WTC11 (cell line): ENCODE measurements at regions of chr2 and their contacts with region 1.

Region 1: DNA sequence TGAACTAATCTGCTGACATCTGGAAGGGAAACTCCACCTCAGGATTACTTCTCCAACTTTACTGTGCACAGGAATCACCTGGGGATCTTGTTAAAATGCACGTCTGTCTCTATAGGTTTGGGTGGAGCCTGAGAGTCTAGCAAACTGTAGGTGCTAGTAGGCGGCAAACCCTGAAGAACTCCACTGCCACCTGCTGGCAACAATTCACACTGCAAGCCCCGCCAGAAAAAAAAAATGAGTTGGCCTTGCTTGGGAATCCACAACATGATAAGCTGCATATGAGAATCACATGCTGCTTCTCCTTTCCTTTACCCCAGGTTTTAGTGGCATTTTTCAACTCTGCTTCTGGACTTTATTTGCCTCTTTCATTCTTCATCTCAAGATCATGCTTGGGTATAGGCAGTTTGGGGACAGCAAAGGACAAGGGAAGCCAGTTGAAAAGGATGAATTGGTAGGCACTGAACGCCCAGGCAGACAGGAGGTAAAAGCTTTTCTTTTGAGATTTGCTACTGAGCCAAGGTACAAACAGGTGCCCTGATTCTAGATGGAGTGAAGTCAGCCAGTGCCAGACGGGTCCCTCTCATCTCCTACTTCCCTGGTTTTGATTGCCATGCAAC is 88.8 kb downstream of the VIT start:
- DNase-seq: peak; percentile 71
- ATAC-seq: peak; percentile 78
- H3K4me3 Mint-ChIP-seq: peak overlapping the region; percentile 39; the same call in 1 of the 2 replicates
- H3K27ac Mint-ChIP-seq: peak overlapping the region; percentile 41; the same call in 1 of the 2 replicates
- H3K4me1 Mint-ChIP-seq: peaks cover 67% of the 10 kb centered on the region
- H3K27me3 Mint-ChIP-seq: no peaks in the 10 kb centered on the region; the same call in 1 of the 2 replicates
- CTCF ChIP-seq: peak; percentile 98

Region 2: DNA sequence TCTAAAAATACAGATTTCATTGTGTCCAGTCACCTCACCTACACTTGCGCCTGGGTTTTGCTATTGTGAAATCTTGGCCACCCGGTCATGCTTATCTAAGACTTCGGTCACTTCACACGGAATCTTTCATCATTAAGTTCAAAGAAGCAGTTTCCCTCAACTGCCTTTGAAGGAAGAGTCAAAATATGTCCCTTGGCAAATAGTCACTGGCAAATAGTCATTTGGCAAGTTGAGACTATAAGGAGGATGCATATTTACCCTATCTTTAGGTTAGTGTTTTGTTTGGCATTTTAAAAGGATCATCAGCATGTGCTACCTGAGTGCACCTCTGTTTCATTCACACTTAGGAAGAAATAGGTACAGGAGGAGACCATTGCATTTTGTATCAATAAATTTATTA is 283.2 kb before region 1 on chr2:
- CTCF ChIA-PET with region 1: no interaction called
- POLR2A ChIA-PET with region 1: no interaction called
- DNase-seq: no peak
- ATAC-seq: no peak
- H3K4me3 Mint-ChIP-seq: no peak overlapping the region
- H3K27ac Mint-ChIP-seq: no peak overlapping the region
- H3K4me1 Mint-ChIP-seq: peaks cover 2% of the 10 kb centered on the region
- H3K27me3 Mint-ChIP-seq: no peaks in the 10 kb centered on the region
- CTCF ChIP-seq: no peak

Region 3: GRCh38 chr2:36663851-36664695 is 121.2 kb before region 1 on chr2:
- CTCF ChIA-PET with region 1: interaction called, 13 read pairs
- POLR2A ChIA-PET with region 1: no interaction called
- DNase-seq: no peak
- ATAC-seq: peak; percentile 88
- H3K4me3 Mint-ChIP-seq: no peak overlapping the region
- H3K27ac Mint-ChIP-seq: no peak overlapping the region
- H3K4me1 Mint-ChIP-seq: peaks cover 13% of the 10 kb centered on the region
- H3K27me3 Mint-ChIP-seq: no peaks in the 10 kb centered on the region
- CTCF ChIP-seq: peak; percentile 65

Region 4: DNA sequence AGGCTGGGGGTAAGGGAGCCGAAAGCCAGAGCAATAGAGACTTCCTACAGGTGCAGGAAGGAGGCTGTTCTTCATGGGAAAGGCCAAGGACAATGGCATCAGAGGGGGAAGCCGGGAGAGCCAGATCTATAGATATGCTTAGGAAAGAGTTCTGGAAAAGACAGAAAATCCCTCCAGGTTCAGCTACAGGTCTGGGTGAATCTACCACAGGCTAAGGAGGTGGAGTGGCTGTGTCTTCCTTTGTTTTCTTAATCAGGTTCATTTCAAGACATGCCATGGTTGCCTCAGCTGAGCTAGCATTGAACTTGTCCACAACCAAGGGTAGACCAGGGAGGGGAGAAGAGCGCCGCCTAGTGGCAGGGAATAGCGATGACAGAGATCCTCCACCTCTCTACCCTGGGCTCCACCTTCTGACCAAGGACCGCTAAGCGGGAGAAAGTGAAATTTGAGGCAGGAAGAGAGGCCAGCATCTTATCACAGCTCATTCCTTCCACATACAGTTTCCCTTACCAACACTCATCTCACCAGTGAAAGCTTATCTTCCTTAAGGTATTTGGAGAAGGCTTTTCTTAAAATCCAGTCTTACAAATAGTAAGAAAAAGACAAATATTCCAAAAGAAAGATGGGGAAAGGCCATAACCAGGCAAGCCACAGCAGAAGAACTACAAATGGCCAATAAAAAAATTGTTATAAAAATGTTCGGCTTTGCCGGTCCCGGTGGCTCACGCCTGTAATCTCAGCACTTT is 14.6 kb before region 1 on chr2:
- CTCF ChIA-PET with region 1: interaction called, 48 read pairs
- POLR2A ChIA-PET with region 1: no interaction called
- DNase-seq: peak; percentile 82
- ATAC-seq: peak; percentile 96
- H3K4me3 Mint-ChIP-seq: no peak overlapping the region
- H3K27ac Mint-ChIP-seq: no peak overlapping the region
- H3K4me1 Mint-ChIP-seq: peaks cover 10% of the 10 kb centered on the region
- H3K27me3 Mint-ChIP-seq: no peaks in the 10 kb centered on the region
- CTCF ChIP-seq: peak; percentile 98

Region 5: DNA sequence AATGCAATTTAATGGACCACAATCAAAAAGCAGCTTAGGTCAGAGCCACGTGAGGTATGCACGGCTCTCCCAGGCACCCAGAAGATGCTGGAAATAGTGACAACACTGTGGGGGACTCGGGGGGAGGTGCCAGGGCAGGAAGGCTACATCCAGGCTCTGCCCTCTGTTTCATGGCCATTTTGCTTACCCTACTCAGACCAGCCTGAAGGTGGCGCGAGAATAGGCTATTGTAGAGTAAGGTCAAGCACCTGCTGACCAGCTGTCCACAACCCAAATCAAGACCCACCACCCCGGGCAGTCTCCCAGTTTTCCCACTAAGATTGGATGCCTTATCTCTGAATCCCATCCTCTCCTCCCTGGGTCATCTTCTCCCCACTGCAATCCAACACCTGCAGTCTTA is 26.9 kb after region 1 on chr2:
- CTCF ChIA-PET with region 1: interaction called, 13 read pairs
- POLR2A ChIA-PET with region 1: no interaction called
- DNase-seq: peak; percentile 78
- ATAC-seq: peak; percentile 99
- H3K4me3 Mint-ChIP-seq: no peak overlapping the region
- H3K27ac Mint-ChIP-seq: no peak overlapping the region
- H3K4me1 Mint-ChIP-seq: peaks cover 3% of the 10 kb centered on the region; the same call in 1 of the 2 replicates
- H3K27me3 Mint-ChIP-seq: peaks cover 2% of the 10 kb centered on the region; the same call in 1 of the 2 replicates
- CTCF ChIP-seq: no peak; the same call in 1 of the 2 replicates

Region 6: GRCh38 chr2:36835125-36835524 is 49.8 kb after region 1 on chr2:
- CTCF ChIA-PET with region 1: interaction called, 10 read pairs
- POLR2A ChIA-PET with region 1: no interaction called
- DNase-seq: no peak
- ATAC-seq: peak; percentile 17; the same call in 1 of the 2 replicates
- H3K4me3 Mint-ChIP-seq: 0 out of 2 replicates have a peak overlapping the region, but pooled peaks have one; percentile 0
- H3K27ac Mint-ChIP-seq: peak overlapping the region; percentile 96
- H3K4me1 Mint-ChIP-seq: peaks cover 39% of the 10 kb centered on the region
- H3K27me3 Mint-ChIP-seq: no peaks in the 10 kb centered on the region
- CTCF ChIP-seq: no peak